Natural killer cell (primary cell): ENCODE measurements at regions of chr3 and their contacts with region 1.

Region 1: GRCh38 chr3:150495563-150496168 is 50.6 kb downstream of the SERP1 start:
- DNase-seq: peak in 1 of 2 donors; percentile 76
- ATAC-seq: peak in 2 of 3 donors; percentile 60 to 69
- H3K4me3 ChIP-seq: no peak overlapping the region
- H3K4me3 Mint-ChIP-seq: no peak overlapping the region
- H3K27ac ChIP-seq: no peak overlapping the region
- H3K27ac Mint-ChIP-seq: no peak overlapping the region
- H3K4me1 ChIP-seq: no peaks in the 10 kb centered on the region
- H3K4me1 Mint-ChIP-seq: no peaks in the 10 kb centered on the region
- H3K27me3 ChIP-seq: no peaks in the 10 kb centered on the region
- H3K27me3 Mint-ChIP-seq: peaks cover 0 to 3% of the 10 kb centered on the region in 2 donors
- CTCF ChIP-seq: peak; percentile 91

Region 2: DNA sequence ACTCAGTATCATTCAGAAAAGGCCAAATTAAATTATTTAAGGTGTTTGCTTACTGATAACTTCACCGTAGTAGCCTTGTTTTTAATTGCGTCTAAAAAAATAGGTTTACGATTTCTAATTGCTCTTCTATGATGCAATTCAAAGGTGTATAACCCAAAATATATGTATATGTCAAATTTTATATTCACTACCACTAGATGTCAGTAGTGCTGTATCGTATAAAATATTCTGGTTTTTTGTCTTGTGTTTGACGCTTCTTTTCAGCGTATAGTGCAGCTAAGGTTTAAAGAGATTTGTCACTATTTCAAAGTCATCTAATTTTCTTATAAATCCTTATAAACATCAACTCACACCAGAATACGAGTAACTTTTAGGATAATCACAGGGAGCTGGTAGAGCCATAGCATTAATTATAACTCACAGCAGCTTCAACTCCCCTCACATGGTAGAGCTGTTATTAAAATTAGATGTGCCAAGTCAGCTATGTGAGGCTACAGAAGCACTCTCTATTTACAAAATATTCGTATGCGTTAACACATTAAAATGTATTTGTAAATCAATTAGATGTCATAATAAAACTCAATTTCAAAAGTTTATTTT is 528.5 kb before region 1 on chr3:
- intact Hi-C with region 1: loop called (anchors 2 kb)
- DNase-seq: peak in 1 of 2 donors; percentile 70
- ATAC-seq: no peak
- H3K4me3 ChIP-seq: no peak overlapping the region
- H3K4me3 Mint-ChIP-seq: peak overlapping the region; percentile 50
- H3K27ac ChIP-seq: no peak overlapping the region
- H3K27ac Mint-ChIP-seq: no peak overlapping the region
- H3K4me1 ChIP-seq: peaks cover 11% of the 10 kb centered on the region
- H3K4me1 Mint-ChIP-seq: peaks cover 20 to 23% of the 10 kb centered on the region in 2 donors
- H3K27me3 ChIP-seq: peaks cover 9% of the 10 kb centered on the region
- H3K27me3 Mint-ChIP-seq: peaks cover 8 to 14% of the 10 kb centered on the region in 2 donors
- CTCF ChIP-seq: peak; percentile 73

Region 3: DNA sequence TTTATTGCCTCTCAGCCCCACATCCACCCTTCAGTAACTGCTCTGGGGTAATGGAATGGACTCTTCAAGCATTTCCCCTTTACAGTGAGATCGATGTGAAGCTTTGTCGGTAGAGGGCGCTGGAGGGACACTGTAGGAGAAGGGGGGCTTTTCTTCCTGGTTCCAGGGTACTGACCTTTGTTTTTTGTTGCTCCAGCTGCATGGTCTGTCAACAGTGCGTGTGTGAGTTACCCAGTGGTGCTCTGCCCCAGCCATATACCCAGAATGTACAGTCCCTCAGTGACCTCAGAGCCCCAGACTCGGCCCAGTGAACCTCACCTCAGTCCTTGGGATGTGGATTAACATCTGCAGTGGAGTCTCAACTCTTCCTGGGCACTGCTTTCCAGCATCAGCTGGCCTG is 267.8 kb before region 1 on chr3:
- intact Hi-C with region 1: loop called (anchors 5 kb)
- DNase-seq: peak in 1 of 2 donors; percentile 43
- ATAC-seq: peak in 1 of 3 donors; percentile 37
- H3K4me3 ChIP-seq: no peak overlapping the region
- H3K4me3 Mint-ChIP-seq: no peak overlapping the region
- H3K27ac ChIP-seq: no peak overlapping the region
- H3K27ac Mint-ChIP-seq: no peak overlapping the region
- H3K4me1 ChIP-seq: no peaks in the 10 kb centered on the region
- H3K4me1 Mint-ChIP-seq: no peaks in the 10 kb centered on the region
- H3K27me3 ChIP-seq: no peaks in the 10 kb centered on the region
- H3K27me3 Mint-ChIP-seq: peaks cover 17 to 20% of the 10 kb centered on the region in 2 donors
- CTCF ChIP-seq: peak; percentile 47

Region 4: GRCh38 chr3:150286390-150287147 is 209.1 kb before region 1 on chr3:
- intact Hi-C with region 1: loop called (anchors 5 kb)
- DNase-seq: peak in 1 of 2 donors; percentile 69
- ATAC-seq: peak; percentile 39 to 67 (median 40)
- H3K4me3 ChIP-seq: no peak overlapping the region
- H3K4me3 Mint-ChIP-seq: no peak overlapping the region
- H3K27ac ChIP-seq: no peak overlapping the region
- H3K27ac Mint-ChIP-seq: no peak overlapping the region
- H3K4me1 ChIP-seq: no peaks in the 10 kb centered on the region
- H3K4me1 Mint-ChIP-seq: peaks cover 0 to 3% of the 10 kb centered on the region in 2 donors
- H3K27me3 ChIP-seq: peaks cover 5% of the 10 kb centered on the region
- H3K27me3 Mint-ChIP-seq: peaks cover 18 to 61% of the 10 kb centered on the region in 2 donors
- CTCF ChIP-seq: peak; percentile 31

Region 5: GRCh38 chr3:150319904-150320303 is 175.8 kb before region 1 on chr3:
- intact Hi-C with region 1: loop called (anchors 10 kb)
- DNase-seq: no peak
- ATAC-seq: no peak
- H3K4me3 ChIP-seq: no peak overlapping the region
- H3K4me3 Mint-ChIP-seq: no peak overlapping the region
- H3K27ac ChIP-seq: no peak overlapping the region
- H3K27ac Mint-ChIP-seq: no peak overlapping the region
- H3K4me1 ChIP-seq: no peaks in the 10 kb centered on the region
- H3K4me1 Mint-ChIP-seq: no peaks in the 10 kb centered on the region
- H3K27me3 ChIP-seq: peaks cover 3% of the 10 kb centered on the region
- H3K27me3 Mint-ChIP-seq: peaks cover 16 to 34% of the 10 kb centered on the region in 2 donors
- CTCF ChIP-seq: no peak

Region 6: GRCh38 chr3:150384296-150385212 is 111.1 kb before region 1 on chr3:
- intact Hi-C with region 1: loop called (anchors 10 kb)
- DNase-seq: peak; percentile 38 to 81
- ATAC-seq: peak; percentile 92 to 95 (median 93)
- H3K4me3 ChIP-seq: peak overlapping the region; percentile 0
- H3K4me3 Mint-ChIP-seq: peak overlapping the region; percentile 72
- H3K27ac ChIP-seq: peak overlapping the region; percentile 67
- H3K27ac Mint-ChIP-seq: peak overlapping the region; percentile 73 to 76
- H3K4me1 ChIP-seq: peaks cover 22% of the 10 kb centered on the region
- H3K4me1 Mint-ChIP-seq: peaks cover 17 to 18% of the 10 kb centered on the region in 2 donors
- H3K27me3 ChIP-seq: no peaks in the 10 kb centered on the region
- H3K27me3 Mint-ChIP-seq: peaks cover 0 to 2% of the 10 kb centered on the region in 2 donors
- CTCF ChIP-seq: peak; percentile 54

Region 7: GRCh38 chr3:150408221-150409102 is 87.2 kb before region 1 on chr3 and contains the start of gene TSC22D2:
- intact Hi-C with region 1: loop called (anchors 1 kb)
- DNase-seq: peak; percentile 97 to 99
- ATAC-seq: peak; percentile 68 to 86 (median 77)
- H3K4me3 ChIP-seq: peak within 1 kb of the TSS; percentile 98
- H3K4me3 Mint-ChIP-seq: peak within 1 kb of the TSS; percentile 92
- H3K27ac ChIP-seq: peak within 1 kb of the TSS; percentile 99
- H3K27ac Mint-ChIP-seq: peak within 1 kb of the TSS; percentile 90 to 96
- H3K4me1 ChIP-seq: peaks cover 16% of the 10 kb centered on the region
- H3K4me1 Mint-ChIP-seq: peaks cover 48 to 49% of the 10 kb centered on the region in 2 donors
- H3K27me3 ChIP-seq: no peaks in the 10 kb centered on the region
- H3K27me3 Mint-ChIP-seq: no peaks in the 10 kb centered on the region
- CTCF ChIP-seq: no peak
- total RNA-seq, gene TSC22D2: 50.1 to 66.3 (median 63.0) TPM